Common myeloid progenitor, CD34-positive (primary cell): ENCODE measurements at regions of chr11 and their contacts with region 1.

Region 1: DNA sequence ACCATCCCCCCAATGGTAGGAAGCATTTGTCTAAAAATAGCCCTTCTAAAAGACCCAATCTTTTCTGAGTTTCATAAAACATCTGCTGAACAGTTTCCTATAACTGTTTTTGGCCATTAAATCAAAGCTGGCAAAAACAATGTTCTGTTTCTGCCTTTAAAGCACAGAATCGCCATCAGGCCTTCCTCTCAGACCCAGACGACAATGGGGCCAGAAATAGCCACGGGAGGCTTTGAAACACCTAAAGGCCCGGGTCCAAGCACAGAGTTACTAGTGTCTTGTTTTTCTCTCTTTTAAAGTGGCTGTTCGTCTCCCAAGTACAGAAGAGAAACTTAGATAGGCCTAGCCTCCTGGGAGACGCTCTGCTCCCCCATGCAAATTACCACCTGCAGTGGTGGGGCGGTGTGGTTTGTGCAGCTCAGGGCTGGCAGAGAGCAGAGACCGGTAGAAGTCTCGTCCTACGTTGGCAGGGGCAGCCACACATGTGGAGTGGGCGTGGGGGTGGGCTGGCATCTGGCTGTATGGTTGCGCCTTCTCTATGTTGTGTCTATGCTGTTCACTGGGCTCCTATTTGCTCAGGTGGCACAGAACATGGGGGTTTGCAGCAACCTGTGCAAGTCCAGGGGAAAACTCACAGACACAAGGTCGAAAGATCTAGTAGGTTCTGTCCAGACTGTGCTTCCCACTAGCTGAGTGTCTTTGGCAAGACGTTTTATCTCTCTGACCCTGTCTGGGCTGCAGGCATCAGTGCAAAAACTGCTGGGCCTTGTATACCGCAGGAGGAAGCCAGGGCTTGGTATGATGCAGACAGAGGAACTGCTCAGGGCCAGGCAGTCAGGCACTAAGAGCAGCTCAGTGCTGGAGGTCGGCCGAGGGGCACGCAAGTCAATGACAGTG is 23.6 kb upstream of the ETS1 start:
- DNase-seq: peak; percentile 61 to 91 (median 85)
- H3K4me3 ChIP-seq: peak overlapping the region in 3 of 7 experiments; percentile 21 to 37 (median 33)
- H3K27ac ChIP-seq: peak overlapping the region; percentile 13 to 46
- H3K4me1 ChIP-seq: peaks cover 15 to 43% (median 33%) of the 10 kb centered on the region in 4 experiments
- H3K27me3 ChIP-seq: no peaks in the 10 kb centered on the region

Region 2: GRCh38 chr11:128548655-128549255 is 62.2 kb before region 1 on chr11:
- CTCF ChIA-PET with region 1: no interaction called
- POLR2A ChIA-PET with region 1: no interaction called
- DNase-seq: peak; percentile 92 to 97 (median 96)
- H3K4me3 ChIP-seq: peak overlapping the region in 6 of 7 experiments; percentile 11 to 71 (median 58)
- H3K27ac ChIP-seq: peak overlapping the region in 1 of 2 experiments; percentile 64
- H3K4me1 ChIP-seq: peaks cover 24 to 71% (median 55%) of the 10 kb centered on the region in 4 experiments
- H3K27me3 ChIP-seq: no peaks in the 10 kb centered on the region

Region 3: GRCh38 chr11:128593281-128593680 is 17.7 kb before region 1 on chr11:
- CTCF ChIA-PET with region 1: interaction called, 10 read pairs
- POLR2A ChIA-PET with region 1: no interaction called
- DNase-seq: no peak
- H3K4me3 ChIP-seq: no peak overlapping the region
- H3K27ac ChIP-seq: no peak overlapping the region
- H3K4me1 ChIP-seq: peaks cover 0 to 4% (median 1%) of the 10 kb centered on the region in 4 experiments
- H3K27me3 ChIP-seq: no peaks in the 10 kb centered on the region